IMR-90 (cell line): ENCODE measurements at regions of chrX and their contacts with region 1.

Region 1: GRCh38 chrX:2889045-2889605 is 40.0 kb downstream of the ARSD start:
- DNase-seq: no peak
- ATAC-seq: peak; percentile 34
- H3K4me3 ChIP-seq: peak overlapping the region; percentile 49
- H3K27ac ChIP-seq: no peak overlapping the region
- H3K4me1 ChIP-seq: no peaks in the 10 kb centered on the region; the same call in 1 of the 2 replicates
- H3K27me3 ChIP-seq: no peaks in the 10 kb centered on the region
- CTCF ChIP-seq: no peak
- POLR2A ChIP-seq: no peak
- RAD21 ChIP-seq: no peak

Region 2: GRCh38 chrX:2774776-2775175 is 114.3 kb before region 1 on chrX:
- CTCF ChIA-PET with region 1: no interaction called
- POLR2A ChIA-PET with region 1: no interaction called
- dilution Hi-C with region 1: no loop called
- in situ Hi-C with region 1: no loop called
- intact Hi-C with region 1: loop called (anchors 5 kb)
- DNase-seq: no peak
- ATAC-seq: no peak
- H3K4me3 ChIP-seq: no peak overlapping the region
- H3K27ac ChIP-seq: no peak overlapping the region
- H3K4me1 ChIP-seq: no peaks in the 10 kb centered on the region
- H3K27me3 ChIP-seq: peaks cover 3% of the 10 kb centered on the region; the same call in 1 of the 2 replicates
- CTCF ChIP-seq: no peak
- POLR2A ChIP-seq: no peak
- RAD21 ChIP-seq: no peak

Region 3: DNA sequence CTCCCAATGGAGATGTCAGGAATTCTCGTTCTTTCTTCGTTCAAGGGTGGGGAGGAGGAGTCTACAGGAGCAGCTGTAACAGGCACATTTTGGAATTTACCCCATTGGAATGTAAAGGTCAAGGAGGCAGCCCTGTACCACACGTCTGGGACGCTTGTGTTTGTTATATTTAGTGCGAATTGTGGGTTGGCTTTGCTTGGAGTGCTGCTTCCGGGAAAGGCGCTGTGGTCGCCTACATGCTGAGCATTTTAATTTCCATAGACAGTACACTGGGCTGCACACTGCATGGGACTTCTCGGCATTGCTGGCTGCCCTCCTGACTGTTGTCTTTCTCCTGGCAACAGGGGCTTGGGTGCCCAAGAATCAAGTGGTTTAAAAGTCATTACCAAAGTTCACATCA is 47.6 kb before region 1 on chrX:
- CTCF ChIA-PET with region 1: no interaction called
- POLR2A ChIA-PET with region 1: no interaction called
- dilution Hi-C with region 1: no loop called
- in situ Hi-C with region 1: no loop called
- intact Hi-C with region 1: no loop called
- DNase-seq: no peak
- ATAC-seq: peak; percentile 78
- H3K4me3 ChIP-seq: no peak overlapping the region
- H3K27ac ChIP-seq: no peak overlapping the region
- H3K4me1 ChIP-seq: no peaks in the 10 kb centered on the region
- H3K27me3 ChIP-seq: no peaks in the 10 kb centered on the region
- CTCF ChIP-seq: no peak
- POLR2A ChIP-seq: no peak
- RAD21 ChIP-seq: no peak